ENCODE measurements at regions of chr2 and their contacts with region 1.

Region 1: GRCh38 chr2:28958689-28959088 is 22.4 kb upstream of the TOGARAM2 start:
- DNase-seq: peak; percentile 77 to 83
- ATAC-seq: peak; percentile 80 to 86
- H3K4me3 ChIP-seq: no peak overlapping the region
- H3K27ac ChIP-seq: peak overlapping the region; percentile 30 to 37; a peak in 2 of 6 replicates
- H3K4me1 ChIP-seq: peaks cover 5% of the 10 kb centered on the region
- CTCF ChIP-seq: peak; percentile 97
- EP300 ChIP-seq: no peak
- POLR2A ChIP-seq: no peak
- RAD21 ChIP-seq: peak; percentile 98 to 99

Region 2: GRCh38 chr2:28695245-28695647 is 263.4 kb before region 1 on chr2:
- CTCF ChIA-PET with region 1: no interaction called
- POLR2A ChIA-PET with region 1: no interaction called
- DNase-seq: no peak
- ATAC-seq: no peak
- H3K4me3 ChIP-seq: no peak overlapping the region
- H3K27ac ChIP-seq: peak overlapping the region; percentile 18 to 51; a peak in 3 of 6 replicates
- H3K4me1 ChIP-seq: peaks cover 14% of the 10 kb centered on the region
- CTCF ChIP-seq: no peak
- EP300 ChIP-seq: no peak
- POLR2A ChIP-seq: no peak
- RAD21 ChIP-seq: no peak

Region 3: DNA sequence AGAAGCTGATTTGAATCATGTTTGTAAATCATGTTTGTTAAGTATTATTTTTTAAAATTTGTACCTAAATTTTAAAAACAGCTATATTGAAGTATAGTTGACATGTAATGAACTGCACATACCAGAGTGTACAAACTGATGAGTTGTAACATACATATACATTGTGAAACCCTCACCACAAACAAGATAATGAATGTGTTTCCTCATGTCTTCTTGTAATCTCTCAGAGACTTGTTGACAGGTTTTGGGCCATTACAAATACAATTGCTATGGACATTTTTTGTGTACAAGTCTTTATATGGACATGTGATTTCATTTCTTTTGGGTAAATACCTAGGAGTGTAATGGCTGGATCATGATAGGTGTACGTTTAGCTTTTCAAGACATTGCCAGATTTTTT is 42.8 kb before region 1 on chr2:
- CTCF ChIA-PET with region 1: no interaction called
- POLR2A ChIA-PET with region 1: no interaction called
- DNase-seq: peak in 1 of 2 experiments; percentile 15
- ATAC-seq: no peak
- H3K4me3 ChIP-seq: no peak overlapping the region
- H3K27ac ChIP-seq: no peak overlapping the region
- H3K4me1 ChIP-seq: no peaks in the 10 kb centered on the region
- CTCF ChIP-seq: no peak
- EP300 ChIP-seq: no peak
- POLR2A ChIP-seq: no peak
- RAD21 ChIP-seq: no peak

Region 4: DNA sequence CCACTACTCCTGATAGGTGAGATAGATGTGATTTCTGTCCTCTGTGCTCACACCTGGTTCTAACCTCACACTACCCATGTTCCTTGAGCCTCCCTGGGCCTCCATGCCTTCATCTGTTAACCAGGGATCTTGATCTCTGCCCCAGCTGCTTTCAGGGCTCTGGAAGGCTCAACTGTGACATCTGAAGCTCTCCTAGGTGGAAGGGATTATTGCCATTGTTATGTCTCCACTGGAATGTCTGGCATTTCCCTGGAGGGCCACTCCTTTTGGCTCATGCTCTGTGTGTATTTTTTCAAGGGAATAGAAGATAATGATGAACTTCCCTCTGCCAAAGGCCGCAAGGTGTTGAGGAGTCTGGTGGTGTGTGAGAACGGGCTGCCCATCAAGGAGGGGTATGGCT is 74.5 kb after region 1 on chr2:
- CTCF ChIA-PET with region 1: no interaction called
- POLR2A ChIA-PET with region 1: no interaction called
- DNase-seq: peak; percentile 66 to 84
- ATAC-seq: peak; percentile 70 to 92
- H3K4me3 ChIP-seq: no peak overlapping the region
- H3K27ac ChIP-seq: peak overlapping the region; percentile 34 to 78
- H3K4me1 ChIP-seq: peaks cover 18% of the 10 kb centered on the region
- CTCF ChIP-seq: no peak
- EP300 ChIP-seq: no peak
- POLR2A ChIP-seq: no peak
- RAD21 ChIP-seq: no peak

Region 5: GRCh38 chr2:29130295-29130694 is 171.6 kb after region 1 on chr2:
- CTCF ChIA-PET with region 1: interaction called, 10 read pairs
- POLR2A ChIA-PET with region 1: no interaction called
- DNase-seq: peak; percentile 41 to 96
- ATAC-seq: peak; percentile 90 to 95
- H3K4me3 ChIP-seq: peak overlapping the region; percentile 42
- H3K27ac ChIP-seq: peak overlapping the region; percentile 89 to 96
- H3K4me1 ChIP-seq: peaks cover 79% of the 10 kb centered on the region
- CTCF ChIP-seq: no peak
- EP300 ChIP-seq: peak in 1 of 2 experiments; percentile 57; a peak in 2 of 5 replicates
- POLR2A ChIP-seq: no peak
- RAD21 ChIP-seq: 0 out of 5 replicates have a peak, but pooled peaks of 1 of the 2 experiments have one; percentile 15

Region 6: DNA sequence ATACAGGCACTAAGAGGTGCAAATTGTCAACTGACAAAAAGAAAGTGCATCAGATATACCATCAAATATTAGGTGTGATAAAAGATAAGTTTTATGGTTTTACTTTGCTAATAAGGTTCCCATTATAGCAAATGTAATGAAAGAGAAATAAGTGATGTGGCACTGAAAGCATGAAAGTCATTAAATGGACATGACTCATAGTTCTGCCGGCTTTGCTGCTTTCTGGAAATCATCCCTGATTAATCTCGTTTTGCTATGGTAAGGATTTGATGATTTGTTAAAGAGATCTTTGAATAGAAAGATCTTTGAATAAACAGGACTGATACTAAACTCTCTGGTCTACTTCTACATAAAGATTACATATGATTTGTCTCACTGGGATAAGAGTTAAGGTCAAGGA is 229.2 kb after region 1 on chr2:
- CTCF ChIA-PET with region 1: interaction called, 69 read pairs
- POLR2A ChIA-PET with region 1: no interaction called
- DNase-seq: no peak
- ATAC-seq: no peak
- H3K4me3 ChIP-seq: no peak overlapping the region
- H3K27ac ChIP-seq: no peak overlapping the region
- H3K4me1 ChIP-seq: peaks cover 3% of the 10 kb centered on the region; the same call in 2 of the 3 replicates
- CTCF ChIP-seq: no peak
- EP300 ChIP-seq: no peak
- POLR2A ChIP-seq: no peak
- RAD21 ChIP-seq: no peak

Region 7: GRCh38 chr2:29196792-29197788 is 238.4 kb after region 1 on chr2:
- CTCF ChIA-PET with region 1: interaction called, 69 read pairs
- POLR2A ChIA-PET with region 1: no interaction called
- DNase-seq: peak; percentile 79 to 81
- ATAC-seq: peak; percentile 89 to 96
- H3K4me3 ChIP-seq: no peak overlapping the region
- H3K27ac ChIP-seq: no peak overlapping the region
- H3K4me1 ChIP-seq: peaks cover 3% of the 10 kb centered on the region; the same call in 1 of the 3 replicates
- CTCF ChIP-seq: peak; percentile 92
- EP300 ChIP-seq: no peak
- POLR2A ChIP-seq: no peak
- RAD21 ChIP-seq: peak; percentile 98 to 99

Measured in A549 (cell line).